ENCODE measurements at regions of chr3 and their contacts with region 1.

Region 1: DNA sequence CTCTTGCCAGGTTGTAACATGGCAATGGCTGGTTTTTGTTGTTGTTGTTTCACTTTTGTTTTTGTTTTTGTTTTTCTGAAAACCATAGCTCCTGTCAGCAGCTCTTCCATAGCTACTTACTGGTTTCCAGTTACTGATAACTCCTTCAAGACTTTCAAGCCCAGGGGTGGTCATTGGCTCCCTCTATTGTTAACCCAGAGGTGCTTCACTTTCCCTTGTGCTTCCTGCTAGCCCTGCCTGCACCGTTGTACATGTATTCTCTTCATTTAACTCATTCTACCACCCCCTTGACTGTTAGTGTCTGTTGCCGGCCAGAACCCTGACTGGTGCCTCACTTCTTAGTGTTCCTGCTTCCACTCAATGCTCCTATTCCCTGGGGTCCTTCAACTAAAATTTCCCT is 4.2 kb upstream of the TRAT1 start:
- DNase-seq: peak; percentile 74
- ATAC-seq: peak; percentile 89
- H3K4me3 Mint-ChIP-seq: no peak overlapping the region
- H3K27ac Mint-ChIP-seq: peak overlapping the region; percentile 31
- H3K4me1 Mint-ChIP-seq: peaks cover 24% of the 10 kb centered on the region
- H3K27me3 Mint-ChIP-seq: no peaks in the 10 kb centered on the region
- CTCF ChIP-seq: peak; percentile 78

Region 2: GRCh38 chr3:108662130-108662738 is 156.2 kb before region 1 on chr3:
- CTCF ChIA-PET with region 1: interaction called, 41 read pairs
- POLR2A ChIA-PET with region 1: interaction called, 3 read pairs
- intact Hi-C with region 1: loop called (anchors 2 kb)
- DNase-seq: peak; percentile 17
- ATAC-seq: peak; percentile 61
- H3K4me3 Mint-ChIP-seq: no peak overlapping the region
- H3K27ac Mint-ChIP-seq: no peak overlapping the region
- H3K4me1 Mint-ChIP-seq: peaks cover 8% of the 10 kb centered on the region
- H3K27me3 Mint-ChIP-seq: no peaks in the 10 kb centered on the region
- CTCF ChIP-seq: peak; percentile 85

Region 3: GRCh38 chr3:108669208-108669607 is 149.2 kb before region 1 on chr3:
- CTCF ChIA-PET with region 1: interaction called, 41 read pairs
- POLR2A ChIA-PET with region 1: interaction called, 3 read pairs
- intact Hi-C with region 1: no loop called
- DNase-seq: no peak
- ATAC-seq: no peak
- H3K4me3 Mint-ChIP-seq: no peak overlapping the region
- H3K27ac Mint-ChIP-seq: no peak overlapping the region
- H3K4me1 Mint-ChIP-seq: peaks cover 13% of the 10 kb centered on the region
- H3K27me3 Mint-ChIP-seq: no peaks in the 10 kb centered on the region
- CTCF ChIP-seq: no peak

Region 4: DNA sequence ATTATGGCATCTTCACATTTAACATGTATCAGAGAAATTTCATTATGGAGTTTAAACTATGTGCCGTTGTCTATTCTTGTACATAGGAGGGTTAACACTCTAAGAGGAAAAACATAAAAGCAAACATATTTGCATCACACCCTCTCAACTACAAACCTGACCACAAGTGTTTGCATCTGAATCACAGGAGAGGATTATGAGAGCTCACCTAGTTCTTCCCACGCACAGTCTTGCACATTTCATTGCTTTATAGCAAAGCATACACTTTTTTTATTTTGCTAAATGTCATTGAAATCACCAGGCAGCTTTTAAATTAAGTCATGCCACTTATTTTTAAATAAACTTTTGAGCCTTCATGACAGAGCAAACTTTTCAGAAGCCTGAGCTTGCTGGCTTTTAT is 16.7 kb after region 1 on chr3:
- CTCF ChIA-PET with region 1: interaction called, 31 read pairs
- POLR2A ChIA-PET with region 1: interaction called, 10 read pairs
- intact Hi-C with region 1: no loop called
- DNase-seq: peak; percentile 75
- ATAC-seq: peak; percentile 72
- H3K4me3 Mint-ChIP-seq: peak overlapping the region; percentile 68
- H3K27ac Mint-ChIP-seq: peak overlapping the region; percentile 79
- H3K4me1 Mint-ChIP-seq: peaks cover 86% of the 10 kb centered on the region
- H3K27me3 Mint-ChIP-seq: no peaks in the 10 kb centered on the region
- CTCF ChIP-seq: no peak

Region 5: GRCh38 chr3:108907194-108907593 is 88.8 kb after region 1 on chr3:
- CTCF ChIA-PET with region 1: interaction called, 113 read pairs
- POLR2A ChIA-PET with region 1: no interaction called
- intact Hi-C with region 1: no loop called
- DNase-seq: no peak
- ATAC-seq: no peak
- H3K4me3 Mint-ChIP-seq: no peak overlapping the region
- H3K27ac Mint-ChIP-seq: no peak overlapping the region
- H3K4me1 Mint-ChIP-seq: peaks cover 11% of the 10 kb centered on the region
- H3K27me3 Mint-ChIP-seq: no peaks in the 10 kb centered on the region
- CTCF ChIP-seq: no peak

Measured in activated CD8-positive, alpha-beta T cell treated with anti-CD3 and anti-CD28 coated beads for 36 hours (primary cell).